Calu3 (cell line): ENCODE measurements at regions of chr12 and their contacts with region 1.

Region 1: GRCh38 chr12:57459055-57459749 is 383 bp upstream of the GLI1 start:
- DNase-seq: peak; percentile 96
- H3K4me3 Mint-ChIP-seq: peak overlapping the region; percentile 74
- H3K27ac Mint-ChIP-seq: peak overlapping the region; percentile 96
- H3K4me1 Mint-ChIP-seq: peaks cover 56% of the 10 kb centered on the region
- H3K27me3 Mint-ChIP-seq: peaks cover 46% of the 10 kb centered on the region
- CTCF ChIP-seq: peak; percentile 95

Region 2: DNA sequence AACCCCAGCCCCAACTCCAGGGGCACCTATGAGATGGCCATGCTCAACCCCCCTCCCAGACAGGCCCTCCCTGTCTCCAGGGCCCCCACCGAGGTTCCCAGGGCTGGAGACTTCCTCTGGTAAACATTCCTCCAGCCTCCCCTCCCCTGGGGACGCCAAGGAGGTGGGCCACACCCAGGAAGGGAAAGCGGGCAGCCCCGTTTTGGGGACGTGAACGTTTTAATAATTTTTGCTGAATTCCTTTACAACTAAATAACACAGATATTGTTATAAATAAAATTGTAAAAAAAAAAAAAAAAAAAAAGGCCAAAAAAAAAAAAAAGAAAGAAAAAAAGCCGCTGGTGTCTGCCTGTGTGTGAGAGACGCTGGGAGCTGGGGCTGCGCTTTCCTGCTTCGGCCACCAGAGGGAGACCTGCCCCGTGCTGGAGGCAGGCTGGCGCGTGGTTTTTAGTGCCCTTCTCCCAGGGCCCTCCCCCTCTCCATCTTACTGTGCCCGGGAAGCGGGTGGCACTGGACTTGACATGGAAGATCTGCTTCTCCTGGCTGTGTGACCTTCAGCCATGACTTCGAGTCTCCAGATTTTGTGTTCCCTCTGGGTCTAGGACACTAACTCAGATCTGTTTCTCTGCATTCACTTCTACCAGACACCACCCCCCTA is 246.0 kb before region 1 on chr12:
- CTCF ChIA-PET with region 1: interaction called, 6 read pairs
- intact Hi-C with region 1: loop called (anchors 5 kb)
- DNase-seq: peak; percentile 94
- H3K4me3 Mint-ChIP-seq: no peak overlapping the region
- H3K27ac Mint-ChIP-seq: no peak overlapping the region
- H3K4me1 Mint-ChIP-seq: peaks cover 37% of the 10 kb centered on the region
- H3K27me3 Mint-ChIP-seq: peaks cover 39% of the 10 kb centered on the region
- CTCF ChIP-seq: peak; percentile 83

Region 3: GRCh38 chr12:57255916-57256315 is 203.3 kb before region 1 on chr12:
- CTCF ChIA-PET with region 1: no interaction called
- intact Hi-C with region 1: no loop called
- DNase-seq: no peak
- H3K4me3 Mint-ChIP-seq: no peak overlapping the region
- H3K27ac Mint-ChIP-seq: no peak overlapping the region
- H3K4me1 Mint-ChIP-seq: no peaks in the 10 kb centered on the region
- H3K27me3 Mint-ChIP-seq: no peaks in the 10 kb centered on the region
- CTCF ChIP-seq: no peak

Region 4: GRCh38 chr12:57309420-57309819 is 149.8 kb before region 1 on chr12:
- CTCF ChIA-PET with region 1: interaction called, 13 read pairs
- intact Hi-C with region 1: no loop called
- DNase-seq: no peak
- H3K4me3 Mint-ChIP-seq: no peak overlapping the region
- H3K27ac Mint-ChIP-seq: no peak overlapping the region
- H3K4me1 Mint-ChIP-seq: no peaks in the 10 kb centered on the region
- H3K27me3 Mint-ChIP-seq: no peaks in the 10 kb centered on the region
- CTCF ChIP-seq: no peak

Region 5: DNA sequence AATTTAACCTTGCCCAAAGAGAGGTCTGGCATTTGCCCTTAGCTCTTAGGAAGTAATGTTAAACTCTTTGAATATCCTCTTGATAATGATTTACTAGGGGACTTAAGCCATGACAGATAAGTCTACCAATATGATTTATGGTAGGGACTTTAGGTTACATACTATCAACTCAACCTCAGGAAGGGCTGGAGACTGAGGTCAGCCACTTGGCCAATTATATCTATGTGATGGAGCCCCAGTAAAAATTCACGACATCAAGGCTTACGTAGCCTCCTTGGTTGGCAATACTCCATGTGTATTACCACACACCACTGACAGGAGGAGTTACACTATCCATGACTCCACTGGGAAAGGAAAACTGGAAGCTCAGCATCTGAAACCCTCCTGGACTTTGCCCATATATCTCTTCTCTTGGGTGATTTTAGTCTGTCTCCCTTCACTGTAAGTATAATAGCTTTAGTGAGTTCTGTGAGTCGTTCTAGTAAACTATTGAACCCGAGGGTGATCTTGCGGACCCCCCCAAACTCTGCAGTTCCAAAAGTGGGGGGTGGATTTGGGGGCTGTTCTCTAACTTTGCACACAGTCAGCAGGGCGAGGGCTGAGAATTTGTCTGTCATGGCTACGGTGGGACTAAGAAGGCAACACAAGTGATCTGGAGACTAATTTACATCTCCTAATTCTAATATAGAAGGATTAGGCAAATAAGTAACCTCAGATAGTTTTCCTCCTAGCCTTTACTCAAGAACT is 90.7 kb before region 1 on chr12:
- CTCF ChIA-PET with region 1: interaction called, 16 read pairs
- intact Hi-C with region 1: no loop called
- DNase-seq: peak; percentile 8
- H3K4me3 Mint-ChIP-seq: no peak overlapping the region
- H3K27ac Mint-ChIP-seq: peak overlapping the region; percentile 27
- H3K4me1 Mint-ChIP-seq: no peaks in the 10 kb centered on the region
- H3K27me3 Mint-ChIP-seq: no peaks in the 10 kb centered on the region
- CTCF ChIP-seq: no peak

Region 6: GRCh38 chr12:57621497-57622292 is 162.5 kb after region 1 on chr12:
- CTCF ChIA-PET with region 1: no interaction called
- intact Hi-C with region 1: loop called (anchors 10 kb)
- DNase-seq: peak; percentile 76
- H3K4me3 Mint-ChIP-seq: peak overlapping the region; percentile 67
- H3K27ac Mint-ChIP-seq: no peak overlapping the region
- H3K4me1 Mint-ChIP-seq: peaks cover 15% of the 10 kb centered on the region
- H3K27me3 Mint-ChIP-seq: peaks cover 100% of the 10 kb centered on the region
- CTCF ChIP-seq: peak; percentile 96